Posterior cingulate gyrus (tissue), 11 donors: ENCODE measurements at regions of chr6 and their contacts with region 1.

Region 1: DNA sequence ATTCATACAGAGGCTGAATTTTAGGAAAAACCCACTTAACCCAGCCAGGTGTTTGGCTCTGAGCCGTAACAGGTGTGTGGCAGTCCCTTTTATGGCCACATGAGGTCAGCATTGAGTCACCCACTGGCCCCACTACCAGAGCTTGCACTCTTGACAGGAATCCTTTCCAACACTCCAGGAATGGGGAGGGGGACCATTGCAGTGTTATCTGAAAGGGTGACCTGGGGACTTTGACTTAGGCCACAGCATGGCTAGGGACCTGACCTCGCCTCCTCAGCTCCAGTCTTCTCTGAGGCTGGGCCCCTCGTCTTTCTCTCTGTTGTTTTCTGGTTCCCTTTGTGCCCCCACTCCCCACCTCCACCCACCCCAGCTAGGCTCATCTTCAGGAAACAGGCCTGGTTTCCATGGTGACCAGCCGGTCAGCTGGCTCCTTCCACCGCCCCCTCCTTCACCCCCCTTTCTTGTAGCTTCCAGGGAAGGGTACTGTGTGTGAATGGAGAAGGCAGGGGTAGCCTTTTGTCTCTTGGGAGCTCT is 2.1 kb upstream of the TMEM151B start:
- DNase-seq: peak in 8 of 10 donors; percentile 40 to 92 (median 66)

Region 2: GRCh38 chr6:44257025-44257752 is 11.0 kb before region 1 on chr6 and contains the start of gene SLC35B2:
- intact Hi-C with region 1: no loop called
- DNase-seq: peak; percentile 79 to 98 (median 86)

Region 3: DNA sequence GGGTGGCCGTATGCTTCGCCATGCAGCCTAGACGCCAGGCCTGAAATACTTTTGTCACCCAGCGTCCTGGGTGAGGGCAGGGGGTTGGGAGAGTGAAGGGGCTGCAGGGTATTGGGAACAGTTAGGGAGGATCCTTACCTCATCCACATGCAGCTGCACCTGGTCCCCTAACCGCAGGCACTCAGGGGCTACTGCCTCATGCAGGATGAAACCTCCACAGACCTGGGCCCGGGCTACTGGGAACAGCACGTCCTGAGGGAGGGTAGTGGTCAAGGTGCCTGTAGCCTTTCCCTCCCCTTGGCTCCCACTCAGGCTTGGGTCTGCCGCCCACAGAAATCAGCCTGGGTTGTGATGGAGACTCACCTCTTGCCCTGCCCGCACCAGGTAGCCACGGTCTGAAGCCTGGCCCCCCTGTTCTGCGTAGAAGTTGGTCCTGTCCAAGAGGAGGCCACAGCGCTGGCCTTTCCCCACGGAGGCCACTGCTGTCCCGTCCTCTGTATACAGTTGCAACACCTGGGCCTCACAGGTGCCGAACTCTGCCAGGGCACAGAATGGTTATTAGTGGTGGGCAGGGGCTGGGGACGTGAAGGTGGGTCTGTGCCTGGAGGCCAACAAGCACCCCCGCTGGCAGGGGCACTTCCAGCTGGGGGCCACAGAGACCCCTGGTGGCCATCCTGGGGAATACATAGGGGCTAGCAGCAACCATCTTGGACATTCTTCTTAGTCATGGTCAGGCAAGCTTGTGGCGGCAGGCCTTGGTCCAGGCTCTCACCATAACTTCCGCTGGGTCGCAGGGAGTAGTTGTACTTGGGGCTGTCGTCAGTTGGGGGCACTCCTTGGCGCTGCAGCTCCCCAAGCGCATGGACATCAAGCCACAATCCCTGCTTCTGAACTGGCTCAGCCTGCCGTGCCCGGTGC is 36.4 kb after region 1 on chr6:
- intact Hi-C with region 1: loop called (anchors 1 kb)
- DNase-seq: peak in 6 of 10 donors; percentile 45 to 94 (median 52)